Posterior vena cava (tissue), 2 donors: ENCODE measurements at regions of chrX and their contacts with region 1.

Region 1: GRCh38 chrX:109440475-109440874 is 41.4 kb downstream of the GUCY2F start:
- DNase-seq: no peak

Region 2: DNA sequence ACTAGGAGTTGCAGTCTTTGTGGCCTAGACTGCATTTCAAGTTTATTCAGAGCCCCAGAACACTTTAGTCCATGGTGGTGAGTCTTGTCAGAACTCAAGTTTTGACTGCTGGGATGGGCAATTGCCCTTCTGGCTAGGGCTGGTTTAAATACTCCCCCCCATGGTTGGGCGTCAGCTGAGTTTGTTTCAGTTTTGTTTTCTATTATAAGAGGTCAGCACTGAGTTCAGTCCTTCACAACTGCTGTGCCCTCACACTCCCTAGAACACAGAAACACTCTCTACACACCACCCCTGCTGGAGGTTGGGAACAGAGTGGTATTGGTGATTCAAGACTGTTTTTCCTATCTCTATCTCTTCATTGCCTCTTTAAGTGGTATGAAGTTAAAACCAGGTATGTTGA is 175.6 kb before region 1 on chrX:
- intact Hi-C with region 1: no loop called
- DNase-seq: no peak

Region 3: DNA sequence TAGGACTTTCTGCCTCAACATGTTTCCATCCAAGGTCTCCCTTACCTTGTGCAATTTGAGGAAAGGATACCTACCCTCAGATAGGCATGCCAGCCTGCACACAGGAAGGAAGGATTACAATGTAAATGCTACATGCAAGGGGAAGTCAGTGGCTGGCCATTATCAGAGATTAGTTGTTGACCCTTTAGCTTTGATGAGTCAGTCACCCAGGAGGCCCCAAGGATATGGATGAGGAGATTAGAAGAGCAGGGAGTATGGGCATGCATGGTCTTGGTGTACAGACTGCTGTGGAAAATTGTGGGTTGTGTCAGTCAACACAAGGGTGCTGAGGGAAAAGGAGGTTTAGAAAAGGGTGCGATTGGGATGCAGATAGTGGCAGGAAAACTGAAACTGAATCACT is 50.6 kb before region 1 on chrX:
- intact Hi-C with region 1: loop called in 1 of 2 experiments (anchors 2 kb)
- DNase-seq: no peak